SK-N-SH (cell line): ENCODE measurements at regions of chr17 and their contacts with region 1.

Region 1: GRCh38 chr17:29369831-29370735 is 20.1 kb upstream of the TAOK1 start:
- DNase-seq: peak; percentile 70
- H3K4me3 ChIP-seq: peak overlapping the region; percentile 23 to 60; a peak in 3 of 4 replicates
- H3K27ac ChIP-seq: peak overlapping the region; percentile 4 to 47; a peak in 2 of 4 replicates
- H3K4me1 ChIP-seq: peaks cover 0 to 10% of the 10 kb centered on the region in 2 experiments; a peak in 2 of 4 replicates
- H3K27me3 ChIP-seq: no peaks in the 10 kb centered on the region
- CTCF ChIP-seq: peak; percentile 77
- EP300 ChIP-seq: no peak
- RAD21 ChIP-seq: peak; percentile 82

Region 2: DNA sequence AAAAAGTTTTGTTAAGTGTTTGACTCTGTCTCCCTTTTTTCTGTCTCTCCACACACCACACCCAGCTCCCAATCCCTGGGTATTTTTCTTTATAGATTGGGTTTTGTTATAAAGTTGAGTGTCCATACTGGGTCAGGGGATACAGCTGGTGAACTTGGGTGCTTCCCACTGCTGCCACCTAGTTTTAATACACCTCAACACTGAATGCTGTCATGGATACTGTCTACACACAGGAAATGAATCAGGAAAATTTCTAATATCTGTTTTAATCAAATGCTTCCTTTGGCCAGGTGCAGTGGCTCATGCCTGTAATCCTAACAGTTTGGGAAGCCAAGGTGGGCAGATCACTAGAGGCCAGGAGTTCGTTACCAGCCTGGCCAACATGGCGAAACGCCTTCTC is 14.8 kb after region 1 on chr17:
- CTCF ChIA-PET with region 1: interaction called, 30 read pairs
- POLR2A ChIA-PET with region 1: interaction called, 6 read pairs
- DNase-seq: no peak
- H3K4me3 ChIP-seq: no peak overlapping the region
- H3K27ac ChIP-seq: no peak overlapping the region
- H3K4me1 ChIP-seq: no peaks in the 10 kb centered on the region; a peak in 1 of 4 replicates
- H3K27me3 ChIP-seq: no peaks in the 10 kb centered on the region
- CTCF ChIP-seq: 0 out of 2 replicates have a peak, but pooled peaks have one; percentile 14
- EP300 ChIP-seq: no peak
- RAD21 ChIP-seq: no peak

Region 3: GRCh38 chr17:29514792-29515191 is 144.7 kb after region 1 on chr17:
- CTCF ChIA-PET with region 1: interaction called, 16 read pairs
- POLR2A ChIA-PET with region 1: no interaction called
- DNase-seq: no peak
- H3K4me3 ChIP-seq: no peak overlapping the region
- H3K27ac ChIP-seq: peak overlapping the region in 1 of 2 experiments; percentile 7; a peak in 1 of 4 replicates
- H3K4me1 ChIP-seq: 0 out of 4 replicates have a peak, but pooled peaks cover 0 to 7% of the 10 kb centered on the region in 2 experiments
- H3K27me3 ChIP-seq: no peaks in the 10 kb centered on the region
- CTCF ChIP-seq: no peak
- EP300 ChIP-seq: no peak
- RAD21 ChIP-seq: no peak

Region 4: DNA sequence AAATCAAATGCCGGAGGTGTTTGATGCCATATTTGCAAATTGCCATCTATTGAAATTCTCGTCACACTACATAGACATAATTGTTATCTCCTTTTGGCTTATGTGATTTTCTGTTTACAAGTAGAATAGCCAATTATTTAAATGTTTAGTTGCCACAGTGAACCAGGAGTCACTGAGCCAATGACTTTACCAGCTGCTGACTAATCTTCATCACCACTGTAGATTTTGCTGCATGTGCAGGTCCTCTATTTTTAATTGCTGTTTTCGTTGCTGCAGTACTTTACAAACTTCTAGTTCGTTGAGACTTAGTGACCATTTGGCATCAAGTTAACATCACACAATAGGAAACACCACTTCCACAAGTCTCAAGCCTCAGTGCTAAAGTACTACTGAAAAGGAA is 174.0 kb after region 1 on chr17:
- CTCF ChIA-PET with region 1: interaction called, 75 read pairs
- POLR2A ChIA-PET with region 1: no interaction called
- DNase-seq: no peak
- H3K4me3 ChIP-seq: no peak overlapping the region
- H3K27ac ChIP-seq: no peak overlapping the region
- H3K4me1 ChIP-seq: peaks cover 0 to 3% of the 10 kb centered on the region in 2 experiments; a peak in 2 of 4 replicates
- H3K27me3 ChIP-seq: no peaks in the 10 kb centered on the region
- CTCF ChIP-seq: no peak
- EP300 ChIP-seq: no peak
- RAD21 ChIP-seq: no peak

Region 5: DNA sequence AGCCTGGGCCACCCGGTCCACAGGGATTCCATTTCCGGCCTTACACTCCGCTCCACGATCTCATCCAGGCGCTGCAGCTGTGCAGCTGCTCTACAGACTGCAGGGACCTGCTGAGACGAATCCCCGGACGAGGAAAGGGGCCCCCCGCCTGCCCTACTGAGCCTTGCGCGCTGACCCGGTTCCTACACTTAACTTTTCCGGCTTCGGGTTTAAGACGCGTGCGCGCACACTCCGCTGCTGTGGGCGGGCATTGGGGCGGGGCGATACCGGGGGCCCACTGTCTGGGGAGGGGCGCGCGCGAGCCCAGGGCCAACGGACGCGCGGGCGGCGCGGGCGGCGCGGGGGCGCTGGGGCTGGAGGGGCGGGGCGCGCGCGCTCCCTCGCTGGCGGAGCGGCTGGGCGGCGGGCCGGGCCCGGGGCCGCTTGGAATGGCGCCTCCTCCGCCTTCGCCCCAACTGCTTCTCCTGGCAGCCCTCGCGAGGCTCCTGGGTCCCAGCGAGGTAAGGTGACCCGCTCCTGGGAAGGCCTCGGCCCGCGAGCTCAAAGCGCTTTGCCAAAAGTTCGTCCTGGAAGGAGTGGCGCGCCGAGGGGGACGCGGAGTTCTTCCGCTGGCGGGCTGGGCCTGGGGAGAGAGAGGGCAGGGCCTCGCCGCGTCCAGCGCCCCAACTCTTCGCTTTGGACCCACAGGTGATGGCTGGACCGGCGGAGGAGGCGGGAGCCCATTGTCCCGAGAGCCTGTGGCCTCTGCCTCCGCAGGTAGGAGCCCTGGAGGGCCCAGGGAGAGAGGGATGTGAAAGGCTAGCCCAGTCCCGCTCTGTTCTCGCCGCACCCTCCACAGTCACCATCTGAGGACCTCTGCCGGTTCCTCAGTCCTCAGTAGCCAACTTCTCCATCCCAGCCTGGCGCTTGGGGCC is 198.5 kb after region 1 on chr17 and contains the start of gene TP53I13:
- CTCF ChIA-PET with region 1: interaction called, 144 read pairs
- POLR2A ChIA-PET with region 1: interaction called, 3 read pairs
- DNase-seq: peak; percentile 96
- H3K4me3 ChIP-seq: peak within 1 kb of the TSS; percentile 76 to 85
- H3K27ac ChIP-seq: peak within 1 kb of the TSS; percentile 77 to 89
- H3K4me1 ChIP-seq: peaks cover 8 to 27% of the 10 kb centered on the region in 2 experiments; a peak in 1 of 4 replicates
- H3K27me3 ChIP-seq: no peaks in the 10 kb centered on the region
- CTCF ChIP-seq: no peak
- EP300 ChIP-seq: no peak
- RAD21 ChIP-seq: no peak
- polyA plus RNA-seq, gene TP53I13: 39.2 and 45.3 TPM in 2 replicates

Region 6: GRCh38 chr17:29664743-29665480 is 294.8 kb after region 1 on chr17:
- CTCF ChIA-PET with region 1: no interaction called
- POLR2A ChIA-PET with region 1: no interaction called
- DNase-seq: no peak
- H3K4me3 ChIP-seq: no peak overlapping the region
- H3K27ac ChIP-seq: peak overlapping the region; percentile 20 to 63; a peak in 3 of 4 replicates
- H3K4me1 ChIP-seq: peaks cover 0 to 31% of the 10 kb centered on the region in 2 experiments; a peak in 2 of 4 replicates
- H3K27me3 ChIP-seq: no peaks in the 10 kb centered on the region
- CTCF ChIP-seq: no peak
- EP300 ChIP-seq: 0 out of 4 replicates have a peak, but pooled peaks of 1 of the 2 experiments have one; percentile 25
- RAD21 ChIP-seq: no peak